ENCODE measurements at regions of chr10 and their contacts with region 1.

Region 1: DNA sequence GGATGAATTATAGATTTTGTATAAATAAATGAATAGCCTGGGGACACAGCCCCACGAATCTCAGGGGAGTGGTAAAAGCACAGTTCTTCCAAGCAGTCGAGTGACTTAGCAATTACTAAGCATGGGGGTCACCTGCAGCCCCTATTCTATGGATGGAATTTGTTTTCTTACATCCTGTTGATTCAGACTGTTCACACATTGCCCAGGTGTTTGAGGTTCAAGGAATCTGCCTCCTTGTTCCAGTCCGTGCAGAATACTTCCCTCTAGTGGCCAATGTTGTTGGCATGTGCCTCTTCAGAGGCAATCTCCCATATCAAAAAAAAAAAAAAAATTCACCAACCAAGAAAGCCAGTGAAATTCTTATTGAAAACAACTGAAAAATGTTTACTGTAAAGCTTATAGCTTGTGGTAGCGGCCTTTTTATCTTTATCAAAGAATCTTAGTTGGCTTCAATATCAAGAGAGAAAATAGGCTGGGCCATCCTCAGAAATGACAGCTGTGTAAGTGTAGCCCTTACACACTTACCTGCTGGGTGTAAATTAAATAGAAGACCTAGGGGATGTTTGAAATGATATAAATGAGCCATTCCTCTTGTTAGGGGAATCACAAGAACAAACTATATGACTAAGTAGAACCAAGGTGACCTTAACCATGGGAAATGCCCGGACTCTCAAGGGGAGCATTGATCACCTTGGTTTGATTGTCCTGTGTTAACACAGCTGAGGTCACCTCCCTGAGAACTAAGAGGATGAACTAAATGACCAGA is 7.8 kb downstream of the LIPM start:
- DNase-seq: peak; percentile 57
- ATAC-seq: peak; percentile 82
- H3K4me3 Mint-ChIP-seq: no peak overlapping the region
- H3K27ac Mint-ChIP-seq: no peak overlapping the region
- H3K4me1 Mint-ChIP-seq: peaks cover 13% of the 10 kb centered on the region
- H3K27me3 Mint-ChIP-seq: peaks cover 2% of the 10 kb centered on the region

Region 2: GRCh38 chr10:88687853-88688467 is 122.4 kb before region 1 on chr10:
- CTCF ChIA-PET with region 1: interaction called, 13 read pairs
- POLR2A ChIA-PET with region 1: no interaction called
- DNase-seq: no peak
- ATAC-seq: no peak
- H3K4me3 Mint-ChIP-seq: no peak overlapping the region
- H3K27ac Mint-ChIP-seq: no peak overlapping the region
- H3K4me1 Mint-ChIP-seq: no peaks in the 10 kb centered on the region
- H3K27me3 Mint-ChIP-seq: peaks cover 9% of the 10 kb centered on the region

Region 3: GRCh38 chr10:88702848-88703597 is 107.4 kb before region 1 on chr10:
- CTCF ChIA-PET with region 1: interaction called, 11 read pairs
- POLR2A ChIA-PET with region 1: no interaction called
- DNase-seq: no peak
- ATAC-seq: no peak
- H3K4me3 Mint-ChIP-seq: no peak overlapping the region
- H3K27ac Mint-ChIP-seq: no peak overlapping the region
- H3K4me1 Mint-ChIP-seq: no peaks in the 10 kb centered on the region
- H3K27me3 Mint-ChIP-seq: peaks cover 4% of the 10 kb centered on the region

Region 4: GRCh38 chr10:88728107-88728763 is 82.1 kb before region 1 on chr10:
- CTCF ChIA-PET with region 1: interaction called, 10 read pairs
- POLR2A ChIA-PET with region 1: no interaction called
- DNase-seq: peak; percentile 52
- ATAC-seq: no peak
- H3K4me3 Mint-ChIP-seq: no peak overlapping the region
- H3K27ac Mint-ChIP-seq: no peak overlapping the region
- H3K4me1 Mint-ChIP-seq: peaks cover 5% of the 10 kb centered on the region
- H3K27me3 Mint-ChIP-seq: peaks cover 7% of the 10 kb centered on the region

Region 5: GRCh38 chr10:88820748-88821389 is 10.5 kb after region 1 on chr10:
- CTCF ChIA-PET with region 1: interaction called, 30 read pairs
- POLR2A ChIA-PET with region 1: interaction called, 3 read pairs
- DNase-seq: no peak
- ATAC-seq: no peak
- H3K4me3 Mint-ChIP-seq: no peak overlapping the region
- H3K27ac Mint-ChIP-seq: no peak overlapping the region
- H3K4me1 Mint-ChIP-seq: peaks cover 23% of the 10 kb centered on the region
- H3K27me3 Mint-ChIP-seq: no peaks in the 10 kb centered on the region

Region 6: GRCh38 chr10:88828310-88828709 is 17.9 kb after region 1 on chr10:
- CTCF ChIA-PET with region 1: interaction called, 30 read pairs
- POLR2A ChIA-PET with region 1: interaction called, 3 read pairs
- DNase-seq: no peak
- ATAC-seq: no peak
- H3K4me3 Mint-ChIP-seq: no peak overlapping the region
- H3K27ac Mint-ChIP-seq: no peak overlapping the region
- H3K4me1 Mint-ChIP-seq: peaks cover 83% of the 10 kb centered on the region
- H3K27me3 Mint-ChIP-seq: no peaks in the 10 kb centered on the region

Measured in activated CD8-positive, alpha-beta T cell treated with anti-CD3 and anti-CD28 coated beads, Interleukin-2, amount 10 ng/mL, durations not matched to agents 7 days and 5 days (primary cell).